Mucosa of descending colon (tissue), 3 donors: ENCODE measurements at regions of chr18 and their contacts with region 1.

Region 1: DNA sequence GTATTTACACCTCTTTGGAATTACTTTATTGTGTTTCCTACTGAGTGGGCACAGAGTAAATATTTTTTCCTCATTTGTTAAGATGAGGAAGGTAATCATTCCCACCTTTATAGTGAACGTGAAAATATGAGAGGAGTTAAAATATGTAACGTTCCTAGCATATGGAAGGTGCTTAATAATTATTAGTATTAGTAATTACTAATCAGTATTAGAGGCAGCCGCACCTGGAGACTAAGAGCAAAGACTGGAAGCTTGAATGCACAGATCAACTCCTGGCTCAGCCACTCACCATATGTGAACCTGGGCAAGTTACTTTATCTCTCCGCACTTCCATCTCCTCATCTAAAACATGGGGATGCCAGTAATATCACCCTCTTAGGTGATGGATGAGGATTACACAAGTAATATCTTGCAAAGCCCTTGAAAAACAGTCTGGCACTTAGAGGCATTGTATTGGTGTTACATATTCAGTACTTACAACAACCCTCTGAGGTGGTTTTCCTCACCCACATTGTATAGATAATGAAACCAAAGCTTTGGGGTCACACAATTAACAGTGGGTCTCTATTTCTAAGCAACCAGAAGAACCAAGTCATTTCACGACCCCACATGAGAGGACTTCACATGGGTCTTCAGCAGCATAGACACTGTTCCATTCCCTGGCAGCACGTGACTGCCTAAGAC is 100.3 kb upstream of the KCTD1 start:
- DNase-seq: no peak
- ATAC-seq: no peak
- H3K4me3 ChIP-seq: no peak overlapping the region
- H3K4me1 ChIP-seq: no peaks in the 10 kb centered on the region
- CTCF ChIP-seq: no peak

Region 2: GRCh38 chr18:26159353-26159752 is 489.3 kb before region 1 on chr18:
- intact Hi-C with region 1: no loop called
- DNase-seq: no peak
- ATAC-seq: no peak
- H3K4me3 ChIP-seq: no peak overlapping the region
- H3K4me1 ChIP-seq: no peaks in the 10 kb centered on the region
- CTCF ChIP-seq: no peak

Region 3: GRCh38 chr18:26536032-26536431 is 112.6 kb before region 1 on chr18:
- intact Hi-C with region 1: no loop called
- DNase-seq: no peak
- ATAC-seq: no peak
- H3K4me3 ChIP-seq: no peak overlapping the region
- H3K4me1 ChIP-seq: no peaks in the 10 kb centered on the region
- CTCF ChIP-seq: no peak

Region 4: GRCh38 chr18:26621161-26622026 is 27.3 kb before region 1 on chr18:
- intact Hi-C with region 1: loop called in 1 of 2 experiments (anchors 2 kb)
- DNase-seq: peak in 2 of 3 donors; percentile 55 to 65
- ATAC-seq: peak; percentile 81
- H3K4me3 ChIP-seq: no peak overlapping the region
- H3K4me1 ChIP-seq: no peaks in the 10 kb centered on the region
- CTCF ChIP-seq: peak; percentile 47

Region 5: DNA sequence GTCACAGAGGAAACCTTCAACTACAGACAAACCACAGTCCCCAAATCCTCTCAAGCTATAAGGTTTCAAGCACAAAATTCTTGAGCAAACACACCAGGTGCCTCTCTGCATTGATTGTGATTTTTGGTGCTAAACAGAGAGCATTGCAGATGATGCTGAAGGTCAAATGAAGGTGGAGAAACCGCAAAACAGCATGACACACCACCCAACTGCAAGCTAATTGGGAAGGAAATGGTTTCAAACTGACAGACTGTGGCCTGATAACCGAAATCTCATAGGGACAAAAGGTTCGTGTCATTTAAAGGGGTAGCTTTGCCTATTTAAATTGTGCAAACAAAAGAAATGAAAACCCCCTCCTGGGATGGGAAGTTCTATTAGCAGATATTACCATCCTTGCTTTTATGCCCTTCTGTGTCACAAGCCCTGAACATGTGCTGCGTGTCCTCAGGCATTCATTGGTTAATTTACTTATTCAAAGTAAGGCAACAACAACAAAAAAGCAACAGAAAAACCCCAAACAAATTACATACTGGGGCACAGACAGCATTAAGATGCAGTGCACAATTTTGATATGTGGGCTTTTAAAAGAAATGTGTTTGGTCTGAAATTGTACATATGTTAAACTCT is 61.9 kb after region 1 on chr18:
- intact Hi-C with region 1: no loop called
- DNase-seq: no peak
- ATAC-seq: no peak
- H3K4me3 ChIP-seq: no peak overlapping the region
- H3K4me1 ChIP-seq: no peaks in the 10 kb centered on the region
- CTCF ChIP-seq: no peak

Region 6: DNA sequence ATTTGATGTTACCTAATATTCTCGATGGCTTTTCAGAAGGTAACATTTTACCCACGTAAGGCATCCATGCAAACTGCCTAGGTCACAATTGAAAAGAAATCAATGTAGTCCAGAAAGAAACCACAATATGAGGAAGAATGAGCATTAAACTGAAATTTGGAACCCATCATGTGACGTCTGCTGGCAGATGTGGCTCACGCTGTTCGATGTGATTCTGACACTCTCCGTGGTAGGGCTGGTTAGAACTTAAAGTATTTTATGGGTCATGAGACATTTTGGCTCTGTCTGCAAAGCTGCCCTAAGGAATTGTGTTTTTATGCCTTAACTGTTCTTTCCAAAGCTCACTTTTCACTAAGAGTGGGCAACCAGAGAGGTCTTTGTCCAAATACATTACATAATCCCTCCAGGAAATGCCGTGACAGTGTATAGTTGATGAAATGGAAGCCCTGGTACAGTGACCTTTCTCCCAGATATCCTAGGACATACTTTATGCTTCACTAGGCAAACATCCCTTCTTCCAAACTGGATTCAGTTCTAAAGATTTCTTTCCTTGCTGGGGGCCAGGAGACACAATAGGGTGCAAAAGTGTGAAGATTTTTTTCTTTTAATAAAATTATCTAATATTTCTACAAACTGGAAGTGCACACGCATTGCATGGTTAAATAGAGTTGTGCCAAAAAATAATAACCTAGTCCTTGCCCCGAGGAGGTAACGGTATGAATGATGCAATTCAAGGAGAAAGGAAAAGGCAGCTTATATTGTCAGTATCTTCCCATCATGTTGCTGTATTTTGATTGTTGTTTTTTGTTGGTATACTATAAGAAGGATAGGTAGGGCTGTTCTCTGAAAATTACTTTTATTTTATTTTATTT is 97.9 kb after region 1 on chr18:
- intact Hi-C with region 1: no loop called
- DNase-seq: no peak
- ATAC-seq: no peak
- H3K4me3 ChIP-seq: no peak overlapping the region
- H3K4me1 ChIP-seq: no peaks in the 10 kb centered on the region
- CTCF ChIP-seq: no peak